HCT116 (cell line): ENCODE measurements at regions of chr18 and their contacts with region 1.

Region 1: DNA sequence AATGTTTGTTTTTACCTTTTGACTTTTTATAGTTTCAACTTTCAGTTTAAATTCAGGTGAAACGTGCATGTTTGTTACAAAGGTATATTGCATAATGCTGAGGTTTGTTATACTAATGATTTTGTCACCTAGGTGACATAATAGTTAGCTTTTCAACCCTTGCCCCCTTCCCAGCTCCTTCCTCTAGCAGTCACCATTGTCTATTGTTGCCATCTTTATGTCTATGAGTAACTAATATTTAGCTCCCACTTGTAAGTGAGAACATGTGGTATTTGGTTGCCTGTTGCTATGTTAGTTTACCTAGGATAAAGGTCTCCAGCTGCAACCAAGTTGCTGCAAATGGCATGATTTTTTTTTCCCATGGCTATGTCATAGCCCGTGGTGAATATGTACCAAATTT is 322.3 kb upstream of the SETBP1 start:
- DNase-seq: no peak
- ATAC-seq: no peak
- H3K4me3 ChIP-seq: no peak overlapping the region
- H3K27ac ChIP-seq: no peak overlapping the region
- H3K4me1 ChIP-seq: no peaks in the 10 kb centered on the region
- H3K27me3 ChIP-seq: no peaks in the 10 kb centered on the region
- CTCF ChIP-seq: no peak
- POLR2A ChIP-seq: no peak
- RAD21 ChIP-seq: no peak

Region 2: GRCh38 chr18:45175511-45175910 is 817.1 kb after region 1 on chr18:
- CTCF ChIA-PET with region 1: no interaction called
- POLR2A ChIA-PET with region 1: no interaction called
- RAD21 ChIA-PET with region 1: no interaction called
- intact Hi-C with region 1: loop called (anchors 5 kb)
- DNase-seq: no peak
- ATAC-seq: no peak
- H3K4me3 ChIP-seq: no peak overlapping the region
- H3K27ac ChIP-seq: no peak overlapping the region
- H3K4me1 ChIP-seq: no peaks in the 10 kb centered on the region
- H3K27me3 ChIP-seq: no peaks in the 10 kb centered on the region
- CTCF ChIP-seq: no peak
- POLR2A ChIP-seq: no peak
- RAD21 ChIP-seq: no peak